ENCODE measurements at regions of chr9 and their contacts with region 1.

Region 1: GRCh38 chr9:120985810-120986222 is 59.2 kb upstream of the TRAF1 start:
- DNase-seq: peak; percentile 66
- H3K4me3 ChIP-seq: no peak overlapping the region
- CTCF ChIP-seq: peak; percentile 59

Region 2: GRCh38 chr9:120936011-120936763 is 49.6 kb before region 1 on chr9:
- CTCF ChIA-PET with region 1: interaction called, 10 read pairs
- POLR2A ChIA-PET with region 1: no interaction called
- DNase-seq: peak; percentile 60
- H3K4me3 ChIP-seq: peak overlapping the region; percentile 53
- CTCF ChIP-seq: peak; percentile 94

Region 3: GRCh38 chr9:120965344-120966012 is 20.3 kb before region 1 on chr9:
- CTCF ChIA-PET with region 1: interaction called, 20 read pairs
- POLR2A ChIA-PET with region 1: no interaction called
- DNase-seq: no peak
- H3K4me3 ChIP-seq: no peak overlapping the region
- CTCF ChIP-seq: no peak

Region 4: DNA sequence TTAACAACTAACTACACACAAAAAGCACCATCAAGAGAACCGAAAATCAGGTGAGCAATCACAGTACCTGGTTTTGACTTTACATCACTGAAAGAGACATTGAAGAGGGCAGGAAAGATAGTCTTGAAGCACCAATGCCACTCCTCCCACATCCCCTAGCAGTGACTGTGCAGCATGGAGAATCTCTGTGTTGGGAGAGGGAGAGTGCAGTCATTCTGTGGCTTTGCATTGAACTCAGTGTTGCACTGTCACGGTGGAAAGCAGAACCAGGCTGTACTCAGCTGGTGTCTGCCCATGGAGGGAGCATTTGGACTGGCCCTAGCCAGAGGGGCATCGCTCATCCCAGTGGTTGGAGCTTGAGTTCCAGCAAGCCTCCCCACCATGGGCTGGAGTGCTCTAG is 23.8 kb after region 1 on chr9:
- CTCF ChIA-PET with region 1: interaction called, 13 read pairs
- POLR2A ChIA-PET with region 1: no interaction called
- DNase-seq: no peak
- H3K4me3 ChIP-seq: no peak overlapping the region
- CTCF ChIP-seq: no peak

Region 5: GRCh38 chr9:121074635-121075385 is 89.0 kb after region 1 on chr9 and contains the start of gene CNTRL:
- CTCF ChIA-PET with region 1: interaction called, 92 read pairs
- POLR2A ChIA-PET with region 1: no interaction called
- DNase-seq: no peak
- H3K4me3 ChIP-seq: peak within 1 kb of the TSS; percentile 78
- CTCF ChIP-seq: no peak

Measured in AG04449 (cell line).